Panc1 (cell line): ENCODE measurements at regions of chr10 and their contacts with region 1.

Region 1: GRCh38 chr10:101429423-101429822 is 75.5 kb downstream of the BTRC start:
- DNase-seq: no peak
- ATAC-seq: no peak
- H3K4me3 ChIP-seq: no peak overlapping the region
- H3K27ac ChIP-seq: no peak overlapping the region
- H3K4me1 ChIP-seq: no peaks in the 10 kb centered on the region
- H3K27me3 ChIP-seq: no peaks in the 10 kb centered on the region
- CTCF ChIP-seq: no peak

Region 2: GRCh38 chr10:101414034-101414433 is 15.4 kb before region 1 on chr10:
- CTCF ChIA-PET with region 1: interaction called, 11 read pairs
- POLR2A ChIA-PET with region 1: interaction called, 4 read pairs
- in situ Hi-C with region 1: no loop called
- intact Hi-C with region 1: no loop called
- DNase-seq: no peak
- ATAC-seq: no peak
- H3K4me3 ChIP-seq: no peak overlapping the region
- H3K27ac ChIP-seq: no peak overlapping the region
- H3K4me1 ChIP-seq: no peaks in the 10 kb centered on the region
- H3K27me3 ChIP-seq: no peaks in the 10 kb centered on the region
- CTCF ChIP-seq: no peak